ENCODE measurements at regions of chr17 and their contacts with region 1.

Region 1: GRCh38 chr17:76557368-76558197 is 17.7 kb downstream of the PRCD start:
- DNase-seq: peak; percentile 95
- H3K4me3 Mint-ChIP-seq: peak overlapping the region; percentile 99
- H3K27ac Mint-ChIP-seq: peak overlapping the region; percentile 91
- H3K4me1 Mint-ChIP-seq: peaks cover 63% of the 10 kb centered on the region
- H3K27me3 Mint-ChIP-seq: no peaks in the 10 kb centered on the region

Region 2: GRCh38 chr17:76446449-76447231 is 110.9 kb before region 1 on chr17:
- CTCF ChIA-PET with region 1: no interaction called
- POLR2A ChIA-PET with region 1: no interaction called
- DNase-seq: no peak
- H3K4me3 Mint-ChIP-seq: no peak overlapping the region
- H3K27ac Mint-ChIP-seq: no peak overlapping the region
- H3K4me1 Mint-ChIP-seq: peaks cover 89% of the 10 kb centered on the region
- H3K27me3 Mint-ChIP-seq: no peaks in the 10 kb centered on the region

Region 3: DNA sequence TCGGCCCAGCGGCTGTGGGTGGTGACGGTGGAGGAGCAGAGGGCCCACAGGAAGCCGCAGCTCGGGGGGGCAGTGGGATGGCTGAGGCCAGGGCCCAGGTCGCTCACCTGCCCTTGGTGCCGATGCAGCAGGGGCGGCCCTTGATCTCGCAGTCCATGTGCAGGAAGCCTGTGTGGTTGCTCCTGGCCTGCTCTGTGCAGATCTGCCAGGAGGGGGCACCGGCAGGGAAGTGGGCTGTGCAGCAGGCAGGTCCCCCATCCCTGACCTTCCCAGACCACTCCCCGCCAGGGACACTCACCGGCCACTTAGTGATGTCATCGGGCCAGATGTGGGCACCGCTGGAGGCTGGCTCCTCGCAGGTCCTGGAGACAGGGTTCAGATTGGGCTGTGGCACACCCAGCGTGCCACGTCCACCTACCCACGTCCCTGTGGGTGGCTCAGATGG is 84.0 kb before region 1 on chr17:
- CTCF ChIA-PET with region 1: no interaction called
- POLR2A ChIA-PET with region 1: no interaction called
- DNase-seq: no peak
- H3K4me3 Mint-ChIP-seq: no peak overlapping the region
- H3K27ac Mint-ChIP-seq: no peak overlapping the region
- H3K4me1 Mint-ChIP-seq: no peaks in the 10 kb centered on the region
- H3K27me3 Mint-ChIP-seq: no peaks in the 10 kb centered on the region

Region 4: GRCh38 chr17:76492989-76493501 is 64.5 kb before region 1 on chr17:
- CTCF ChIA-PET with region 1: interaction called, 7 read pairs
- POLR2A ChIA-PET with region 1: interaction called, 10 read pairs
- DNase-seq: peak; percentile 67
- H3K4me3 Mint-ChIP-seq: peak overlapping the region; percentile 68
- H3K27ac Mint-ChIP-seq: peak overlapping the region; percentile 94
- H3K4me1 Mint-ChIP-seq: peaks cover 68% of the 10 kb centered on the region
- H3K27me3 Mint-ChIP-seq: no peaks in the 10 kb centered on the region

Region 5: GRCh38 chr17:76547184-76547641 is 10.4 kb before region 1 on chr17:
- CTCF ChIA-PET with region 1: interaction called, 19 read pairs
- POLR2A ChIA-PET with region 1: interaction called, 8 read pairs
- DNase-seq: peak; percentile 54
- H3K4me3 Mint-ChIP-seq: no peak overlapping the region
- H3K27ac Mint-ChIP-seq: no peak overlapping the region
- H3K4me1 Mint-ChIP-seq: peaks cover 8% of the 10 kb centered on the region
- H3K27me3 Mint-ChIP-seq: peaks cover 10% of the 10 kb centered on the region

Region 6: GRCh38 chr17:76585818-76586593 is 28.4 kb after region 1 on chr17 and contains the start of gene ST6GALNAC2:
- CTCF ChIA-PET with region 1: interaction called, 17 read pairs
- POLR2A ChIA-PET with region 1: interaction called, 14 read pairs
- DNase-seq: peak; percentile 53
- H3K4me3 Mint-ChIP-seq: peak within 1 kb of the TSS; percentile 65
- H3K27ac Mint-ChIP-seq: no peak within 1 kb of the TSS
- H3K4me1 Mint-ChIP-seq: peaks cover 16% of the 10 kb centered on the region
- H3K27me3 Mint-ChIP-seq: peaks cover 58% of the 10 kb centered on the region
- total RNA-seq, gene ST6GALNAC2: 0.25 to 0.65 TPM

Region 7: DNA sequence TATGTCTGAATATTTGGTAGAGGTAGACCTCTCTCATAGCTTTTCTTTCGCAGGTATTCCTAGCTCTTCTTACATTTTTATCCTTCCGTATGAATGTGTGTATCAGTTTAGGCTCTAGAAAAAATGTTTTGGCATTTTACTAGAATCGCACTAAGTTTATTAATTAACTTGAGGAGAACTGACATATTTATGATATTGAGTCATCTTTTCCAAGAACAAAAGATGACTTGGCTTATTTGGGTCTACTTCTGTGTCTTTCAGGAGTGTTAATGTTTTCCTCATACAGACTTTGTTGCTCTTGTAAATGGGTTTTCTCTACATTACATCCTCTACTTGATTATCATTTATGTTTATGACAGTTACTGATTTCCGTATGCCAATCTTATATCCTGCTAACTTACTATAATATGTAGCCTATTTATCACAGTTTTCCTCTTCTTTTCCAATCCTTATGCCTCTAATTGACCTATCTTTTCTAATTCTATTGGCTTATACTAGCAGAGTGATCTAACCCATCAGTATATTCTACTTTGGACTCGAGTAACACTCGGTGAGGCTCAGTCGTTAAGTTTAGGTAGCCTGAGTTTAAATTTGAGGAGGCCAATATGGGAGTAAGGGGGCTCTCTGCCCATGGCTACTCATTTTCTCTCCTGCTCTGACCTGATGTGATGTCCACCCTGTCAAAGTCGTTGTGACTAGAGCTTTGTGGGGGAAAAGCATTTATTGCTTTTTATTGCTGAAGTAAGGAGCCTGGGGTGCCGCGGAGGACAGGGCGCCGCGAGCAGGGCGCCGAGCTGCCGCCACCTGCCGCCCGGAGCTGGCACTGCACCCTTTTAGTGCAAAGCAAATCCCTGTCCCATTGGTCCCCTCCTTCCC is 65.9 kb after region 1 on chr17:
- CTCF ChIA-PET with region 1: interaction called, 82 read pairs
- POLR2A ChIA-PET with region 1: interaction called, 38 read pairs
- DNase-seq: peak; percentile 79
- H3K4me3 Mint-ChIP-seq: no peak overlapping the region
- H3K27ac Mint-ChIP-seq: no peak overlapping the region
- H3K4me1 Mint-ChIP-seq: peaks cover 7% of the 10 kb centered on the region
- H3K27me3 Mint-ChIP-seq: peaks cover 15% of the 10 kb centered on the region

Region 8: DNA sequence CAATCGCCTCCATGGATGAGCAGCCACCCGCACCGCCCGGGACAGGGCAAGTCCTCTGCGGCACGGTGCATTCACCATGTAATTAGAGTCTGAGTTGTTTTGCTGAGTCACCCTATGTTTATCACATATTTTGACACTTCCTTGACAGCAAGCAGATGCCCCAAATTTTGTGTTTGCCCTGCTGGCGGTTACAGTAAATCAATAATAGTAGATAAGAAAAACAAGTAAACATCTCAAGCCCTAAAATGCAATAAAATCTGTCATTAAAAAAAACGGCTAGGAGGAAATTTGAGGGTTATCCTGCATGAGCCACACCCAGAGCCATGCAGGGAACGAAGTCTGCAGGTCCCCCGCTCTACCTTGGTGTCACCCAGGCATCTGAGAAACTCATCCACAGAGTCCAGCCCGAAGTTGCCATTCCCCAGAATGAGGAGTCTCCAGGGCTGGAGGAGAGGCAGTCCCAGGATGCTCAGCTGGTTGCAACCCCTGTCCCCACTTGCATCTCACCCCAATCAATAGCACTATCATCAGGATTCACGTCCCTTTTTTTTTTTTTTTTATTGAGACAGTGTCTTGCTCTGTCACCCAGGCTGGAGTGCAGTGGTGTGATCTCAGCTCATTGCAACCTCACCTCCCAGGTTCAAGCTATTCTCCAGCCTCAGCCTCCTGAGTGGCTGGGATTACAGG is 102.5 kb after region 1 on chr17:
- CTCF ChIA-PET with region 1: no interaction called
- POLR2A ChIA-PET with region 1: no interaction called
- DNase-seq: peak; percentile 48
- H3K4me3 Mint-ChIP-seq: peak overlapping the region; percentile 38
- H3K27ac Mint-ChIP-seq: peak overlapping the region; percentile 86
- H3K4me1 Mint-ChIP-seq: peaks cover 32% of the 10 kb centered on the region
- H3K27me3 Mint-ChIP-seq: peaks cover 11% of the 10 kb centered on the region

Region 9: GRCh38 chr17:76681222-76682137 is 123.9 kb after region 1 on chr17:
- CTCF ChIA-PET with region 1: interaction called, 28 read pairs
- POLR2A ChIA-PET with region 1: interaction called, 3 read pairs
- DNase-seq: peak; percentile 79
- H3K4me3 Mint-ChIP-seq: no peak overlapping the region
- H3K27ac Mint-ChIP-seq: no peak overlapping the region
- H3K4me1 Mint-ChIP-seq: peaks cover 8% of the 10 kb centered on the region
- H3K27me3 Mint-ChIP-seq: peaks cover 6% of the 10 kb centered on the region

Region 10: DNA sequence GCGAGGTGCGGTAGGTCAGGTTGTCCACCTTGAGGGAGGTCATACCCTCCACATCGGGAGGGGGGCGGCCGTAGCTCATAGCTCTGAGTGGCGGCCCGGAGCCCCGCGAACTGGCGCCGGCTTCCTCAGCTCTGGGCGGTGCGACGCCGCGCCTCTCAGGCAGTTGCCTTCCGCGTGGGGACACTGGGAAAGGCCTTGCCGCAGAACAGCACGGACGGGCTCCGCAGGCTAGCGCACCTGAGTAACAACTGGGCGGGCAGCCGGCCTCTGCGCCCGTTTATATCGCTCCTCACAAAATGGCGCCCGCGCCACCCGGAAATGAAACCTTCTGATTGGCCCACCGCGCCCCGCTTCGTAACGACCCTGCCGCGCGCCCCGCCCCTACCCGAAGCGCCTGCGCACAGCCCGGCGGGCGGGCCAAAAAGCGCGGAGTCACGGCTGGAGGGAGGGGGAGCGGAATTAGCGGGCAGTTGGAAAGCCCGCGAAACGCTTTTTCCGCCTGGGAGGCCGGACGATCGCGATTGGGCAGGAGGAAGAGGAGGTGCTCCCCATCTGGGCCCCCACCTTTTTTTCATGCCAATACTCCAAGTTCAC is 179.6 kb after region 1 on chr17 and contains the start of gene SRSF2:
- CTCF ChIA-PET with region 1: no interaction called
- POLR2A ChIA-PET with region 1: interaction called, 16 read pairs
- DNase-seq: peak; percentile 100
- H3K4me3 Mint-ChIP-seq: peak within 1 kb of the TSS; percentile 93
- H3K27ac Mint-ChIP-seq: peak within 1 kb of the TSS; percentile 98
- H3K4me1 Mint-ChIP-seq: peaks cover 51% of the 10 kb centered on the region
- H3K27me3 Mint-ChIP-seq: no peaks in the 10 kb centered on the region
- total RNA-seq, gene SRSF2: 316 to 325 TPM

Measured in activated CD4-positive, alpha-beta memory T cell treated with anti-CD3 and anti-CD28 coated beads, Interleukin-2, amount 10 ng/mL, durations not matched to agents 7 days and 5 days (primary cell).